Cardiac septum (tissue), 1 donor: ENCODE measurements at regions of chr12 and their contacts with region 1.

Region 1: GRCh38 chr12:11672256-11673191 is 23.1 kb downstream of the ETV6 start:
- DNase-seq: no peak

Region 2: DNA sequence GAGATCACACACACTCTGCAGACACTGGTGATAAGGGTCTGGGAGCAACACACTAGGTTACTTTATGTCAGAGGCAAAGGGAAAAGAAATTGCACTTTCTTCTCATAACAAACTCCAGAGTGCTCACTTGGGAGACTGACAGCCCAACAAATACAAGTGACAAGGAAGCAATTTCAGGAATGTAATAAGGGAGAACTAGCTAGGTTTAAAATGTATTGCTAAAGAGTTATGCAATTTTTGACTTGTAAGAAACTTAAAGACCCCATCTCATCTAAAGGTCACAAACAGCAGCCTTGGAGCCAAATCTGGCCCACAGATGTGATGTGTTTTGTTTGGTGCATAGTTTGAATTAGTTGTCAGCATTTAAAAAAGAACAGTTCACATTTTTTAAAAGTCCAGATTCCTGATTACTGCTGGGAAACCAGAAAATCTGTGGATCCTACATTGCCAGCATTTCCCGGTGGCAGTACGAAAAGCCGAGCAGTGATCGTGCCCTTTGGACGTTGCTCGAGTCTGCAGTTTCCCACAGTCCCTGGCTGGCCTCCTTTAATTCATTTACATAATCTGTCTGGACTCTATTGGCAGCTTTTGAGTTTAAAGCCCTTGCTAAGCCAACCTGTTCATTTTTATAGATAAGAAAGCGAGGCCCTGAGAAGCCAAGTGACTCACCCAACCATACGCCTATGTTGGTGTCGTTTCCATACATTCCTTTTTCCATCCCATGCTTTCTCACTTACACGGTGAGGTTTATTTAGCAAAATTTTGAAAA is 65.0 kb before region 1 on chr12:
- intact Hi-C with region 1: no loop called
- DNase-seq: no peak

Region 3: GRCh38 chr12:11778713-11779685 is 106.5 kb after region 1 on chr12:
- intact Hi-C with region 1: no loop called
- DNase-seq: no peak

Region 4: GRCh38 chr12:11798856-11799501 is 126.5 kb after region 1 on chr12:
- intact Hi-C with region 1: loop called (anchors 5 kb)
- DNase-seq: no peak